SK-N-SH (cell line): ENCODE measurements at regions of chr7 and their contacts with region 1.

Region 1: DNA sequence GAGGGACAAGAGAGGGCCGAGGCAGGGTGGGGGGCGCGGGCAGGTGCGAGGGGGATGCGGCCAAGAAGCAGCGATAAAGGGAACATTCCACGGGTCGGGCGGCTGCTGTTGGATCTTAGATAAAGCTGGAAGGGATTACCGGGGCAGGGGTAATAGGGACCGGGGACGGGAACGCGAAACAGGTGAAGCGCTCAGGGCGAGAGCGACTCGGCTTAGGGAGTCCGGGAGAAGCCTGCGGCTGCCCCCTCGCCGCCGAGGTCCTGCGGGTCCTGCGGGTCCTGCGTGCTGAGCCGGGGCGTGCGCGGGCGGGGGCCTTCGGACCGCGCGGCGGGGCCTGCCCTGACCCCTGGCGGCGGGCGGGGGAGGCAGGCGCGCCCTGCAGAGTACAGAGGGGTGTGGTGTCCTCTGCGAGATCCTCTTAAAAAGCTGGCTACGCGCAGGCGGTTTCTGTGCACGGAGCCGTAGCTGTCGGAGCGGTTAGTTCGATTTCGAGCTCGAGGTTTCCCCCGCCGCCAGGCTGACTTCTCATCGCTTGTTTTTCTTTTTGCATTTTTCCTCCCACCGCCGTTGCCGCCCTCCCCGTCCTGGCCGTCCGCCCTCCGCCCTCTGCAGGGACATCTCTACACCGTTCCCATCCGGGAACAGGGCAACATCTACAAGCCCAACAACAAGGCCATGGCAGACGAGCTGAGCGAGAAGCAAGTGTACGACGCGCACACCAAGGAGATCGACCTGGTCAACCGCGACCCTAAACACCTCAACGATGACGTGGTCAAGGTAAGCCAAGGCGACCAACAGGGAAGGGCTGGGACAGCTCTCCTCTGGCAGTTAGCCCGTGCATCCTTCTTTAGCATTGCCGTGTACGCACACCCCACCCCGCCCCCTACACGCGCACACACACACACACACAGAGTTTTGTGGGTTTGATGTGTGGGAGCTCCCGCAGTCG is 1.4 kb downstream of the CAV1 start:
- DNase-seq: peak; percentile 90
- H3K4me3 ChIP-seq: peak overlapping the region; percentile 57 to 84
- H3K27ac ChIP-seq: peak overlapping the region; percentile 91 to 99
- H3K4me1 ChIP-seq: peaks cover 4 to 48% of the 10 kb centered on the region in 2 experiments
- H3K27me3 ChIP-seq: no peaks in the 10 kb centered on the region
- CTCF ChIP-seq: peak; percentile 95
- EP300 ChIP-seq: no peak; a peak in 1 of 4 replicates
- RAD21 ChIP-seq: peak; percentile 48; the same call in 1 of the 2 replicates

Region 2: GRCh38 chr7:116511552-116512519 is 14.4 kb before region 1 on chr7:
- CTCF ChIA-PET with region 1: interaction called, 12 read pairs
- POLR2A ChIA-PET with region 1: no interaction called
- DNase-seq: no peak
- H3K4me3 ChIP-seq: peak overlapping the region; percentile 50 to 54
- H3K27ac ChIP-seq: peak overlapping the region; percentile 93 to 95
- H3K4me1 ChIP-seq: peaks cover 10 to 57% of the 10 kb centered on the region in 2 experiments
- H3K27me3 ChIP-seq: no peaks in the 10 kb centered on the region
- CTCF ChIP-seq: no peak
- EP300 ChIP-seq: no peak
- RAD21 ChIP-seq: no peak

Region 3: GRCh38 chr7:116571037-116571436 is 44.9 kb after region 1 on chr7:
- CTCF ChIA-PET with region 1: no interaction called
- POLR2A ChIA-PET with region 1: no interaction called
- DNase-seq: no peak
- H3K4me3 ChIP-seq: peak overlapping the region in 1 of 2 experiments; percentile 2; a peak in 1 of 4 replicates
- H3K27ac ChIP-seq: peak overlapping the region; percentile 82 to 99
- H3K4me1 ChIP-seq: peaks cover 0 to 63% of the 10 kb centered on the region in 2 experiments; a peak in 3 of 4 replicates
- H3K27me3 ChIP-seq: no peaks in the 10 kb centered on the region
- CTCF ChIP-seq: no peak
- EP300 ChIP-seq: peak in 1 of 2 experiments; percentile 86; a peak in 2 of 4 replicates
- RAD21 ChIP-seq: no peak